GM12878 (cell line): ENCODE measurements at regions of chr19 and their contacts with region 1.

Region 1: DNA sequence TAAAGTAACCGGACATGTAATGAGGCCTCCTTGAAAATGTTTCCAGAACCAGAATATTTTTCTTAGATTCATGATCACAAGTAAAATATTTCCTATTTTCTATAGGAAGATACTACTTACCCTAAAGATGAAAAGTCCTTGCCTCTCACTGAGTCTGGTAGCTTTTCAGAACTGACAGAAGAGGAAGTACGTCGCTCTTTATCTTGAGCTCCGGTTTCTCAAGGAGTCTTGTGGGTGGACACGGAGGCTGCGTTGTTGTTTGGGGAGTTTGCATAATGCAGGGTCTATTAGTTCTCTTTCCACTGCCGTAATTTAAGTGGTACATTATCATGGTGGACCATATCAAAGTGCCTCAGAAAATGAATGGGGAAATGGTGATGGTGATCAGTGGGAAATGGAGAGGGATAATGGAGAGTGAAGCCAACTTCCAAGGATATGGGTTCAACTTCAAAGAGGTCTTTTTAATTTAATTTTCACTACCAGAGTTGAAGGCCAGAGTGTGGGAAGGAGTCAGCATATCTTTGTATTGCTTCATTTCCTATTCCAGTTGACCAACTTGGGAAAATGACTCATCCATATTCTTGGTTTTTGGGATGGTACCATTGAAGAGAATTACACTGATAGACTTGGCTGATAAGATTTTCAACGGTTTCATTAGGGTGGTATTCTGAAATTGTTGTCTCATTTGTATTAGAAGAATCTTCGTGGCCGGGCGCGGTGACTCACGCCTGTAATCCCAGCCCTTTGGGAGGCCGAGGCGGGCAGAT is 23.4 kb downstream of the MBD3L2B start:
- DNase-seq: no peak
- ATAC-seq: peak; percentile 80
- H3K4me3 ChIP-seq: no peak overlapping the region
- H3K27ac ChIP-seq: no peak overlapping the region
- H3K4me1 ChIP-seq: no peaks in the 10 kb centered on the region
- H3K27me3 ChIP-seq: no peaks in the 10 kb centered on the region
- CTCF ChIP-seq: no peak
- EP300 ChIP-seq: no peak
- POLR2A ChIP-seq: no peak
- RAD21 ChIP-seq: no peak

Region 2: GRCh38 chr19:6958791-6959190 is 39.1 kb before region 1 on chr19:
- CTCF ChIA-PET with region 1: no interaction called
- POLR2A ChIA-PET with region 1: no interaction called
- RAD21 ChIA-PET with region 1: no interaction called
- SMC1A ChIA-PET with region 1: no interaction called
- in situ Hi-C with region 1: no loop called
- intact Hi-C with region 1: no loop called
- DNase-seq: no peak
- ATAC-seq: no peak
- H3K4me3 ChIP-seq: no peak overlapping the region
- H3K27ac ChIP-seq: no peak overlapping the region
- H3K4me1 ChIP-seq: no peaks in the 10 kb centered on the region
- H3K27me3 ChIP-seq: no peaks in the 10 kb centered on the region
- CTCF ChIP-seq: no peak
- EP300 ChIP-seq: no peak
- POLR2A ChIP-seq: no peak
- RAD21 ChIP-seq: no peak

Region 3: GRCh38 chr19:6987850-6988249 is 10.0 kb before region 1 on chr19:
- CTCF ChIA-PET with region 1: interaction called, 3 read pairs
- POLR2A ChIA-PET with region 1: interaction called, 10 read pairs
- RAD21 ChIA-PET with region 1: interaction called, 8 read pairs
- SMC1A ChIA-PET with region 1: interaction called, 10 read pairs
- in situ Hi-C with region 1: no loop called
- intact Hi-C with region 1: no loop called
- DNase-seq: no peak
- ATAC-seq: peak; percentile 94
- H3K4me3 ChIP-seq: no peak overlapping the region
- H3K27ac ChIP-seq: no peak overlapping the region
- H3K4me1 ChIP-seq: peaks cover 11% of the 10 kb centered on the region
- H3K27me3 ChIP-seq: no peaks in the 10 kb centered on the region
- CTCF ChIP-seq: no peak
- EP300 ChIP-seq: no peak
- POLR2A ChIP-seq: no peak
- RAD21 ChIP-seq: no peak

Region 4: DNA sequence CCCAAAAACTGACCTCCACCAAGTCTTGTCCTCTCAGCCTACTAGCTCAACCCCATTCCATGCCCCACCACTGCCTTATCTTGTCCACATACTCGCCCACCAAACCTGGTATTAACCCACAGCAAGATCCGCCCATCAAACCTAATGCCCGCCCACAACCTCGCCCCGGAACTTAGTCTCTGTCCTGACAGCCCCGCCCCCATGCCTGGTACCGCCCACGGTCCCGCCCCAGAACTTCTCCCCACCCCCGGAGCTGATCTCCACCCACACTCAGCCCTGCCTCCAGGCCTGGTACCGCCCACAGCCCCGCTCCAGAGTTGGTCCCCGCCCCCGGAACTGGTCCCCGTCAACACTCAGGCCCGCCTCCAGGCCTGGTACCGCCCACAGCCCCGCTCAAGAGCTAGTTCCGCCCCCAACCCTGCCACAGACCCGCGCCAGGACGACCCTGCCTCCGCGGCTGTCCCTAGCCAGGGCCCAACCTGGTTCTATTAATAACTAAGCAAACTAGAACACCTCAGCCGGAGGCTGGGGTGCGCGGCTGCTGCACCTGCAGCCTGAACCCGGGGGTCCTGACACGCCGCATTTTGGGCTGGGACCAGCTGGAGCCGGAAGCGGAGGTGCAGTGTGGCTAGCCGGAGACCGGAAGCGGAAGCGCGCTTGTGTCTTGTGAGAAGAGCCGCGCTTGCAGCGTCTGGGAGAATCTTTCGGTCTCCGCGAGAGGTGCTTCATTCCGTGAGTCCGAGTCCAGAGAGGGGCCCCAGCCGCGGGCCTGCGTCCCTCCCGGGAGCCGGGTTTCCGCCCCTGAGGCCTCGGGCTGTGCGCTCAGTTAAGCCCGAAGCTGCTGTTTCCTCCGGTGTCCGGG is 71.4 kb after region 1 on chr19 and contains the start of gene ZNF557:
- CTCF ChIA-PET with region 1: no interaction called
- POLR2A ChIA-PET with region 1: interaction called, 13 read pairs
- RAD21 ChIA-PET with region 1: interaction called, 14 read pairs
- SMC1A ChIA-PET with region 1: interaction called, 13 read pairs
- in situ Hi-C with region 1: no loop called
- intact Hi-C with region 1: no loop called
- DNase-seq: peak; percentile 88
- ATAC-seq: peak; percentile 99
- H3K4me3 ChIP-seq: peak within 1 kb of the TSS; percentile 91
- H3K27ac ChIP-seq: peak within 1 kb of the TSS; percentile 84
- H3K4me1 ChIP-seq: no peaks in the 10 kb centered on the region
- H3K27me3 ChIP-seq: no peaks in the 10 kb centered on the region
- CTCF ChIP-seq: no peak
- EP300 ChIP-seq: no peak
- POLR2A ChIP-seq: peak; percentile 91
- RAD21 ChIP-seq: no peak
- polyA plus RNA-seq, gene ZNF557: 5.0 to 5.5 TPM

Region 5: DNA sequence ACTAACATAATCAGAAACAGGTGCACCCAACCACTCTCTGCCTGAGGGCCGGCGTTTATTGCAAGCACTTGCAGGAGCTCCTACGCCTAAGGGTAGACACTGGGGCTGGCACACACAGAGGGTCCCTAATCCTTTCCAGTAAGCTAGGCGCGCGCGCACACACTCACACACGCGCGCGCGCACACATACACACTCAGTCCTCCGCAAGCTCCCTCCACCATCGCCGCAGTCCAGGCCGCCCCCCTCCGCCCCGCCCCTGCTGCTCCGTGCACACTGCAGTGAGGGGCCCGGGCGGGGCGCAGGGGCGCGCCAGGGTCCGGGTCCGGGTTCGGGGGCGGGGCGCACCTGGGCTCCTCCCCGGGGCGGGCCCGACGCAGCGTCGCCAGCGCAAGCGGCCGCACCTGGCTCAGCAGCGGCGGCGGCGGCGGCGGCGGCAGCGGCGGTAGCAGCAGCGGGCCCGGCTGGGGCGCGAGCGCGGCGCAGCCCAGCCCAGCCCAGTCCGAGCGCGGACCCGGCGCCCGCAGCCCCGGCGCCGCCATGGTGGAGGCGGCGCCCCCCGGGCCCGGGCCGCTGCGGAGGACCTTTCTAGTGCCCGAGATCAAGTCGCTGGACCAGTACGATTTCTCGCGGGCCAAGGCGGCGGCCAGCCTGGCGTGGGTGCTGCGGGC is 597.7 kb after region 1 on chr19 and contains the start of gene CAMSAP3:
- CTCF ChIA-PET with region 1: no interaction called
- POLR2A ChIA-PET with region 1: no interaction called
- RAD21 ChIA-PET with region 1: no interaction called
- SMC1A ChIA-PET with region 1: no interaction called
- in situ Hi-C with region 1: no loop called
- intact Hi-C with region 1: no loop called
- DNase-seq: no peak
- ATAC-seq: peak; percentile 66
- H3K4me3 ChIP-seq: peak within 1 kb of the TSS; percentile 77
- H3K27ac ChIP-seq: no peak within 1 kb of the TSS
- H3K4me1 ChIP-seq: no peaks in the 10 kb centered on the region; the same call in 1 of the 2 replicates
- H3K27me3 ChIP-seq: peaks cover 0 to 2% of the 10 kb centered on the region in 2 experiments; a peak in 1 of 4 replicates
- CTCF ChIP-seq: no peak
- EP300 ChIP-seq: no peak
- POLR2A ChIP-seq: no peak
- RAD21 ChIP-seq: no peak
- polyA plus RNA-seq, gene CAMSAP3: 0.03 to 0.22 TPM